WTC11 (cell line): ENCODE measurements at regions of chr9 and their contacts with region 1.

Region 1: DNA sequence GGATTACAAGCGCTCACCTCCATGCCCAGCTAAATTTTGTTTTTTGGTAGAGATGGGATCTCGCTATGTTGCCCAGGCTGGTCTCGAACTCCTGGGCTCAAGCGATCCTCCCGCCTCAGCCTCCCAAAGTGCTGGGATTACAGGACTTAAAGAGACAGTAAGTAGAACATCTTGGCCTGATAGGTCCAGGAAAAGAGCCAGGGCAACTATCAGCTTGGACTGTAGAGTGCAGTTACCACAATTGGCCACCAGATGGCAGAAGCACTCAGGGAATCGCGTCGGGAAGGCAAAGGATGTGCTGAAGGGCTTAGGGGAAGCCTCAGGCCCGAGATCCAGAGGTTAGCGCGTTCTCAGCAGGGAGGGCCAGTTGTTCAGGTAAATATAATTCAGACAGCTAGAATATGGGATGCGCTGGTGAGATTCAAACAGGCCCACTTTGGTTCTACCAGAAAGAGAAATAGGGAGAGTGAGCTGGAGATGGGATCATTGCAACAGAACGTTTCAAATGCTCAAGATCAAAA is 21.5 kb downstream of the C9orf57 start:
- DNase-seq: peak; percentile 86
- ATAC-seq: peak; percentile 96
- H3K4me3 Mint-ChIP-seq: no peak overlapping the region
- H3K27ac Mint-ChIP-seq: no peak overlapping the region
- H3K4me1 Mint-ChIP-seq: peaks cover 3% of the 10 kb centered on the region; the same call in 1 of the 2 replicates
- H3K27me3 Mint-ChIP-seq: no peaks in the 10 kb centered on the region
- CTCF ChIP-seq: peak; percentile 99

Region 2: GRCh38 chr9:72022841-72023240 is 16.1 kb before region 1 on chr9:
- CTCF ChIA-PET with region 1: interaction called, 49 read pairs
- POLR2A ChIA-PET with region 1: no interaction called
- DNase-seq: no peak
- ATAC-seq: no peak
- H3K4me3 Mint-ChIP-seq: no peak overlapping the region
- H3K27ac Mint-ChIP-seq: no peak overlapping the region
- H3K4me1 Mint-ChIP-seq: peaks cover 12% of the 10 kb centered on the region
- H3K27me3 Mint-ChIP-seq: no peaks in the 10 kb centered on the region
- CTCF ChIP-seq: no peak

Region 3: DNA sequence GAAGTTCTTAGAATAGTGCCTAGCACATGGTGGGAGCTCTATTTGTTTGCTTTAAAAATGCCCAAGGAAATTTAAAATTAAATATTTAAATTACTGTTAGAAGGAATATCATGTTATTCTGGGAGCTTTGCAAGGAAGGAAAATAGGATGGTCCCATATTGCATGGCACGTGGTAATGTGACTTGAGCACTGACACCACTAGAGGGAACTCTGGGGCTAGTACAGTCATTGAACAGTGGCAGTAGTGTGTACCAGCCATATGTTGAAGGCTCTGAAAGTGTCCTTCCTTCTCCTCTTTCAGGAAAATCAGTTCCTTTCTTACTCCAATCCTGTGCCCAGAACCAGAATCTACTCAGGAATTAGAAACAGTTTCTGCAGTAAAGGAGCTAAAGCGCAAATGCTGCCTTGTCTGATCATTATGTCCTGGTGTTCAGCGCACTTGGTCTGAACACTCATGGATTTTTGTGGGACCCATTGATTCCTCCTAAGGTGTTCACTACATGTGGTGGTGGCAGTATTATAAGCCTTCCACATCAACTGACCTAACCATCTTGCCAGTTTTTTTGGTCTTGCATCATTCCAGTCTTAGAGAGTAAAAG is 164.4 kb after region 1 on chr9:
- CTCF ChIA-PET with region 1: interaction called, 11 read pairs
- POLR2A ChIA-PET with region 1: no interaction called
- DNase-seq: peak; percentile 26
- ATAC-seq: peak; percentile 99
- H3K4me3 Mint-ChIP-seq: no peak overlapping the region
- H3K27ac Mint-ChIP-seq: no peak overlapping the region
- H3K4me1 Mint-ChIP-seq: no peaks in the 10 kb centered on the region
- H3K27me3 Mint-ChIP-seq: no peaks in the 10 kb centered on the region; the same call in 1 of the 2 replicates
- CTCF ChIP-seq: 0 out of 2 replicates have a peak, but pooled peaks have one; percentile 22

Region 4: DNA sequence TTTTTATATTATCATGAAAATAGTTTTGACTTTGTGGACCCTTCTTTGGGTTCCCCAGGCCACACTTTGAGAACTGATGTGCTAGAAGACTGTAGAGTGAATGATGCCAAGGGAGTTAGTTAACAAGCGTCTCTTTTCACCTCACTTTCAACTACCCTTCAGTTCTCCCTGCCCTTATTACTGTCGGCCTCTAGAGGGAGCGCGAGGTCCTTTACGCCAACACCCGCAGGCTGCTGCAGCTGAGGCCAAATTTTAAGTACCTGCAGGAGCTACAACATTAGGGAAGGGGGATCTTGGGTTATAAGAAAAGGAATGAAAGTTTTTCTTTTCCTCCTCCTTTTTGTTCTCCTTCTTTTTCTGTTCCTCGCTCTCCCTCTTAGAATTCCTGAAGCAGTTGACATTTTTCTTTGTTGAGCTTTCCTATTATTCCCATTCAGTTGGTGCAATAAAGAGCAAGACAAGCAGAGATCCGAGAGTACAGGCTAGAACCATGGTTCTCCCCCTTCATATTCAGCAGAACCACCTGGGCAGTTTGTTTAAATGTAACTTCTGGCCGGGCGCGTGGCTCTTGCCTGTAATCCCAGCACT is 242.1 kb after region 1 on chr9:
- CTCF ChIA-PET with region 1: interaction called, 15 read pairs
- POLR2A ChIA-PET with region 1: no interaction called
- DNase-seq: peak; percentile 73
- ATAC-seq: peak; percentile 96
- H3K4me3 Mint-ChIP-seq: no peak overlapping the region
- H3K27ac Mint-ChIP-seq: no peak overlapping the region
- H3K4me1 Mint-ChIP-seq: peaks cover 4% of the 10 kb centered on the region; the same call in 1 of the 2 replicates
- H3K27me3 Mint-ChIP-seq: no peaks in the 10 kb centered on the region
- CTCF ChIP-seq: peak; percentile 84